PC-9 (cell line): ENCODE measurements at regions of chr13 and their contacts with region 1.

Region 1: GRCh38 chr13:32669030-32669646 is 82.9 kb downstream of the PDS5B start:
- DNase-seq: peak in 1 of 2 experiments; percentile 39
- H3K4me3 ChIP-seq: no peak overlapping the region
- H3K27ac ChIP-seq: no peak overlapping the region
- H3K4me1 ChIP-seq: no peaks in the 10 kb centered on the region
- H3K27me3 ChIP-seq: no peaks in the 10 kb centered on the region
- CTCF ChIP-seq: peak; percentile 81

Region 2: GRCh38 chr13:32438871-32439588 is 230.1 kb before region 1 on chr13:
- CTCF ChIA-PET with region 1: interaction called, 13 read pairs
- POLR2A ChIA-PET with region 1: no interaction called
- intact Hi-C with region 1: no loop called
- DNase-seq: no peak
- H3K4me3 ChIP-seq: no peak overlapping the region
- H3K27ac ChIP-seq: no peak overlapping the region
- H3K4me1 ChIP-seq: no peaks in the 10 kb centered on the region
- H3K27me3 ChIP-seq: no peaks in the 10 kb centered on the region
- CTCF ChIP-seq: no peak

Region 3: DNA sequence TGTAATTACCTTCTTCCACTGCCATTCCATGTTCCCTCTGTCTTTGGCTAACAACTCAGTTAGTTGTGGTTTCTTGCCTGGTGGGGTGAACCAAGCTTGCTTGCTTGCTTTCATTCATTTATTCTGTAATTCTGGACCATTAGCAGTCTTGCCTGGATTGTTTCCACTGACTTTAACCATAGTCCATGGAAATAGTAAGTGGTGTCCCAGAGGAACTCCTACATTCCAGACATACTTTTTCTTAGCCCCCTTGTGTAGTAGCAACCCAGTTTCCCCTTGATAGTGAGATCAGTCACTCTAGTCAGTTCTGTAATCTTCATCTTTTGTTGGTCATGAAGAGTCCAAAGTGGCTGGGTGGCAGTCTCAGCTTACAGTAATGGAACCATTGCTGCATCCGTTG is 59.7 kb before region 1 on chr13:
- CTCF ChIA-PET with region 1: no interaction called
- POLR2A ChIA-PET with region 1: no interaction called
- intact Hi-C with region 1: no loop called
- DNase-seq: no peak
- H3K4me3 ChIP-seq: no peak overlapping the region
- H3K27ac ChIP-seq: no peak overlapping the region
- H3K4me1 ChIP-seq: no peaks in the 10 kb centered on the region
- H3K27me3 ChIP-seq: no peaks in the 10 kb centered on the region
- CTCF ChIP-seq: no peak

Region 4: DNA sequence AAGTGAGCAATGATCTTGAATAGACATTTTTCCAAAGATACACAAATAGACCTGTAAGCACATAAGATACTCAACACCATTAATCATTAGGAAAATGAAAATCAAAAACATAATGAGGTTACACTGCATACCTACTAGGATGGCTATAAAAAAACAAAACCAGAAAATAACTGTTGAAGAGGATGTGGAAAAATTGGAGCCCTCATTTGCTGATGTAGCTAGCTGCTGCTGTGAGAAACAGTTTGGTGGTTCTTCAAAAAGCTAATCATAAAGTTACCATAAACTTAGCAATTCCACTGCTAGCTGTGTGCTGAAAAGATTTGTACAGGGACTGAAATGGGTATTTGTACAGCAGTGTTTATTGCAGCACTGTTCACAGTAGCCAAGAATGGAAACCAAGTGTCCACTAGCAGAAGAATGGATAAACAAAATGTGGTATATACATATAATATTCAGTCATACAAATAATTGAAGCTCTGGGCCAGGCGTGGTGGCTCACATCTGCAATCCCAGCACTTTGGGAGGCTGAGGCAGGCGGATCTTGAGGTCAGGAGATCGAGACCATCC is 36.7 kb before region 1 on chr13:
- CTCF ChIA-PET with region 1: no interaction called
- POLR2A ChIA-PET with region 1: no interaction called
- intact Hi-C with region 1: loop called (anchors 2 kb)
- DNase-seq: no peak
- H3K4me3 ChIP-seq: no peak overlapping the region
- H3K27ac ChIP-seq: no peak overlapping the region
- H3K4me1 ChIP-seq: no peaks in the 10 kb centered on the region
- H3K27me3 ChIP-seq: no peaks in the 10 kb centered on the region
- CTCF ChIP-seq: no peak

Region 5: GRCh38 chr13:33388286-33388998 is 719.3 kb after region 1 on chr13:
- CTCF ChIA-PET with region 1: no interaction called
- POLR2A ChIA-PET with region 1: no interaction called
- intact Hi-C with region 1: no loop called
- DNase-seq: peak; percentile 31 to 49
- H3K4me3 ChIP-seq: no peak overlapping the region
- H3K27ac ChIP-seq: no peak overlapping the region
- H3K4me1 ChIP-seq: no peaks in the 10 kb centered on the region
- H3K27me3 ChIP-seq: no peaks in the 10 kb centered on the region
- CTCF ChIP-seq: no peak